ENCODE measurements at regions of chr2 and their contacts with region 1.

Region 1: DNA sequence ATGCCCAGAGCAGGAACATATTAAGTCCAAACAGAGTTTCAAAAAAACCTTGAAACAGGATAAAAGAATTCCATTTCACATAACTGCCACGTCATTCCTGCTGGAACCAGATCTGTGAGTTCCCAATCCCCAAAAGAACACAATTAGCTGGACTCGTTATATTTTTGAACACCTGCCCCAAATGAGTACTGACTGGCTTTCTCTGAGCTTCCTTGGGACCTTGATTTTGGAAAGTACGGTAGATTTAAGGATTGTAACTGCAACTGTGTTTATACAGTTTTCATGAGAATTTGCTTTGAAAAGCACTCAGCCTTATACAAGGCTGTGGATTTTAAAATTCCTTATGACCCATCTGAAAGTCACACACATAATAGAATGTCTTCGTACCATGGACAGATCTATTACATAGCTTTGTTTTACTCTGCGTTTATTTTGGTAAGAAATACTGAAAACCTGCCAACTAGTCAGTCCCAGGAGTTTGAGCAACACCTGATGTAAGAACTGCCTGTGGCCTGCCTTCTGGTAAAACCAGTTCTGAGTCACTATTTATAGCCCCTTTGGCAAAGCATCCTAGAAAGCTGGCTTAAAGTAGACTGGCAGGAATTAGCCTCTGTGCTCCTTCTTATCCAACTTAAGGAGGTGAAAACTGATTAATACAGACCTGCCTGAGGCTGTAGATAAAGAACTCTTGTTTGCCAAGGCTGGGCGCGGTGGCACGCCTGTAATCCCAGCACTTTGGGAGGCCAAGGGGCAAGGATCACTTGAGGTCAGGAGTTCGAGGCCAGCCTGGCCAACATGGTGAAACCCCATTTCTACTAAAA is 48.1 kb downstream of the MERTK start:
- DNase-seq: no peak
- H3K4me3 ChIP-seq: no peak overlapping the region
- H3K27ac ChIP-seq: peak overlapping the region; percentile 56 to 87 (median 84)
- H3K4me1 ChIP-seq: peaks cover 18 to 35% (median 32%) of the 10 kb centered on the region in 4 donors
- H3K27me3 ChIP-seq: no peaks in the 10 kb centered on the region
- CTCF ChIP-seq: no peak
- EP300 ChIP-seq: peak; percentile 39
- POLR2A ChIP-seq: no peak

Region 2: GRCh38 chr2:111897924-111898702 is 48.4 kb before region 1 on chr2 and contains the start of gene MERTK:
- intact Hi-C with region 1: loop called (anchors 5 kb)
- DNase-seq: peak; percentile 96
- H3K4me3 ChIP-seq: peak within 1 kb of the TSS; percentile 85 to 96 (median 93)
- H3K27ac ChIP-seq: peak within 1 kb of the TSS; percentile 84 to 93 (median 89)
- H3K4me1 ChIP-seq: peaks cover 19 to 44% (median 39%) of the 10 kb centered on the region in 4 donors
- H3K27me3 ChIP-seq: no peaks in the 10 kb centered on the region
- CTCF ChIP-seq: peak; percentile 69 to 73 (median 71)
- EP300 ChIP-seq: no peak
- POLR2A ChIP-seq: peak; percentile 67
- total RNA-seq, gene MERTK: 19.9 to 31.0 (median 22.3) TPM

Region 3: GRCh38 chr2:112757265-112757664 is 810.8 kb after region 1 on chr2:
- intact Hi-C with region 1: no loop called
- DNase-seq: no peak
- H3K4me3 ChIP-seq: no peak overlapping the region
- H3K27ac ChIP-seq: no peak overlapping the region
- H3K4me1 ChIP-seq: peaks cover 0 to 35% (median 33%) of the 10 kb centered on the region in 4 donors
- H3K27me3 ChIP-seq: no peaks in the 10 kb centered on the region
- CTCF ChIP-seq: no peak
- EP300 ChIP-seq: no peak
- POLR2A ChIP-seq: no peak

Measured in esophagus muscularis mucosa (tissue), 4 donors.